H1 (cell line): ENCODE measurements at regions of chr19 and their contacts with region 1.

Region 1: DNA sequence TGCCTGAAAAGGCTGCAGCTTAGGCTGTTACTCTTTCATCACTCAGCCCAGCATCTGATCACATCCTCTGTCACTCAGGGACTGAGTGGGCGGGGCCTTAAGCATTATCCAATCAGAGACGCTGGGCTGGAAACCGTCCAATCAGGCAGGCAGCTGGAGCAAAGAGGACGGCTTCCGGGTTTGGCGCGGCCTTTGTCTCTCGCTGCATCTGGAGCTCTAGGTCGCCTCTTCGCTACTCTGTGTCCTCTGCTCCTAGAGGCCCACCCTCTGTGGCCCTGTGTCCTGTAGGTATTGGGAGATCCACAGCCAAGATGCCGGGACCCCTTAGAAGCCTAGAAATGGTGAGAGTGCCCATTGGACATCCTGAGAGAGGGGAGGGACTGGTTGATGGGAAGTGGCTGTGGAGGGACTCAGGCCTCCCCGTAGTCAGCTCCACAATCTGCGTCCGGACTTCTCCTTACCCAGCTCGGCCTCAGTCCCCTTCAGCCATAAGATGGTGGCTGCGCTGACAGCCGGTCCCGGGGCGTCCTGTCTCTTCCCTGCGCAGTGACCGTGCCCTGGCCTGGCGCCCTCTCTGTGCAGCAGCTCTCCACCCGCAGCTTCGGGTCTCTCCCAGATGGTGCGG is at the start of gene ZNF486:
- DNase-seq: peak; percentile 89 to 95
- H3K4me3 ChIP-seq: peak within 1 kb of the TSS; percentile 70 to 94 (median 82)
- H3K27ac ChIP-seq: peak within 1 kb of the TSS; percentile 80
- H3K4me1 ChIP-seq: peaks cover 0 to 5% (median 0%) of the 10 kb centered on the region in 4 experiments; a peak in 1 of 7 replicates
- H3K27me3 ChIP-seq: no peaks in the 10 kb centered on the region
- CTCF ChIP-seq: no peak
- EP300 ChIP-seq: no peak
- POLR2A ChIP-seq: peak; percentile 86 to 94
- RAD21 ChIP-seq: no peak
- total RNA-seq, gene ZNF486: 21.3 and 23.4 TPM in 2 replicates

Region 2: DNA sequence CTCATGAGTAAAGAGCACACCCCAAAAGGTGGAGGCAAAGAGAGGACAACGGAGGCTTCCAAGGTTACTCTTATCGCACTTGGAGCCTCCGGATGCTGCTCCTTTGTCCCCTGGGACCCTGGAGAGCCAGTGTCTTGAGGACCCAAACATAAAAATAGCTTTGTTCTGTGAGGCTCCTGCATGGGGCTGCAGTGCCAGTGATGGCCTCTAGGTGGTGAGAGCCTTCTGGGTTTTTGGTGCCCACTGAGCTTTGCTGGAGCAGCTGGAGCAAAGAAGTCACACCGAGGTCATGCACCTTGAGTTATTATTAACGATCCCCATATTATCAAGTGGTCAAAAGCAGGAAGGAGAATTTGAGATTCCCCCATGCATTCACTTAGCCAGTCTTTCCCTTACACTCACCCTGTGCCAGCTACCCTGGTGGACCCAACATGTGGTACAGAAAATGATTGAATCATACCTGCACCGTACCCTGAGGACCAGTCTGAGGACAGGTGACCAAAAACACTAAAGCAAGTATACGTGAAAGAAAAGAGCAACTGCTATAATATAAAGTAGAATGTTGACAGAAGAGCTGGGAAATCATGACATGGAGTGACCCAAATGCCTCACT is 169.4 kb before region 1 on chr19:
- CTCF ChIA-PET with region 1: interaction called, 9 read pairs
- POLR2A ChIA-PET with region 1: interaction called, 13 read pairs
- DNase-seq: peak; percentile 47 to 90
- H3K4me3 ChIP-seq: no peak overlapping the region
- H3K27ac ChIP-seq: no peak overlapping the region
- H3K4me1 ChIP-seq: no peaks in the 10 kb centered on the region
- H3K27me3 ChIP-seq: no peaks in the 10 kb centered on the region
- CTCF ChIP-seq: peak; percentile 72 to 94 (median 90)
- EP300 ChIP-seq: no peak
- POLR2A ChIP-seq: no peak
- RAD21 ChIP-seq: peak; percentile 87 to 88

Region 3: DNA sequence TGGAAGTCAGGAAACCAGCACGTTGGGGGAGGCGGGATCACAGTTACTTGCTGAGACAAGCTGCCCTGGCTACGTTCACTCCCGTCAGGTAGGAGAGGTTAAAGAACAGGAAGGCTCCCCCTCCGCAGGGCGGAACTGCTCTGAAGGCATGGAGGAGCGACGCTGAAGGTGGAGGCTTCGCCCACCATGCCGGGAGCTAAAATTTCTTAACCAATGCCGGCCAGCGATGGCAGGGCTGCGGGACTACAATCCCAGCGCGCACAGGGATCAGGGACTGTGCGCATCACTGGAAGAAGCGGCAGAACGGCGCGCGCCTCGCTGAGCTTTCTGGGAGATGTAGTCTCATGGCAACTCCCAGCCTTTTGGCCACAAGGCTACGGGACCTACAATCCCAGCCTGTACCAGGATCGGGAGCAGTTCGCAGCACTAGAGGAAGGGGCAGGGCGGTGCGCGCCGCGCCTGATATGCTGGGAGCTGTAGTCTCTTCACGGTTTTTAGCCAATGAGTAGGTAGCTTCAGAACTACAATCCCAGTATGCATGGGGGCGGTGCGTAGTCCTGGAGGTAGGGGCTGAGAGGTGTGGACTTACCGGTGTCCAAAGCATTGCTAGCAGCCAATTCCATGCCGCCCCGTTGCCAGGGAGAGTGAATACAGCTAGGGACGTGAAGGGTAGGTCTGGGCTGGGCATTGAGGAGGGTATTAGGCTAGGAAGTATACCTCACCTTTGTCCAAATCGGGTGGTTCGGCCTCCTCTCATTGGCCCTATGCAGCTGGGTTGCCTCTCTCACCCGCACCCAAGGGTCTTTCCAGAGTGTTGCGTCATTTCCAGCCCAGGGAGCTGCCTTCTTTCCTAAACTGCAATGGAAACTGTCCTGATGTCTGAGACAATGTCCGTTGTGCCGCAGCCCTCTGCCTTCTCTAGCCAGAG is 115.0 kb before region 1 on chr19:
- CTCF ChIA-PET with region 1: no interaction called
- POLR2A ChIA-PET with region 1: interaction called, 17 read pairs
- DNase-seq: peak; percentile 91 to 100
- H3K4me3 ChIP-seq: peak overlapping the region; percentile 76 to 87 (median 82)
- H3K27ac ChIP-seq: peak overlapping the region; percentile 87
- H3K4me1 ChIP-seq: peaks cover 0 to 3% (median 0%) of the 10 kb centered on the region in 4 experiments; a peak in 1 of 7 replicates
- H3K27me3 ChIP-seq: no peaks in the 10 kb centered on the region
- CTCF ChIP-seq: peak; percentile 8 to 19 (median 19); a peak in 2 of 4 replicates
- EP300 ChIP-seq: no peak
- POLR2A ChIP-seq: peak; percentile 66 to 78
- RAD21 ChIP-seq: peak; percentile 1 to 2; a peak in 2 of 4 replicates

Region 4: DNA sequence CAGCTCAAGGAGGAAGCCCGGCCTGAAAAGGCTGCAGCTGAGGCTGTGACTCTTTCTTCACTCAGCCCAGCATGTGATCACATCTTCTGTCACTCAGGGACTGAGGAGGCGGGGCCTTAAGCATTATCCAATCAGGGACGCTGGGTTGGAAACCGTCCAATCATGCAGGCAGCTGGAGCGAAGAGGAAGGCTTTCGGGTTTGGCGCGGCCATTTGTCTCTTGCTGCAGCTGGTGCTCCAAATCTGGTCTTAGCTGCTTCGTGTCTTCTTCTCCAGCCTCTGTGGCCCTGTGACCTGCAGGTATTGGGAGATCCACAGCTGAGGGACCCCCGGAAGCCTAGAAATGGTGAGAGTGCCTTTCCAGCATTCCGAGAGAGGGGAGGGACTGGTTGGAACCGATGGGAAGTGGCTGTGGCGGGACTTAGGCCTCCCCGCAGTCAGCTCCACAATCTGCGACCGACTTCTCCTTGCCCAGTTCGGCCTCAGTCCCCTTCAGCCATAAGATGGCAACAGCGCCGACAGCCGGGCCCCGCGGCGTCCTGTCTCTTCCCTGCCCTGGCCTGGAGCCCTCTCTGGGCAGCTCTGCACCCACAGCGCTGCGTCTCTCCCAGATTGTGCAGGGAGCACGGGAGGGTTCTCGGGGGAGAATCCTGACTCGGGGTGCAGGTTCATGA is 89.2 kb before region 1 on chr19 and contains the start of gene ZNF90:
- CTCF ChIA-PET with region 1: no interaction called
- POLR2A ChIA-PET with region 1: interaction called, 20 read pairs
- DNase-seq: peak; percentile 84 to 96
- H3K4me3 ChIP-seq: peak within 1 kb of the TSS; percentile 89 to 99 (median 96)
- H3K27ac ChIP-seq: peak within 1 kb of the TSS; percentile 93
- H3K4me1 ChIP-seq: peaks cover 9 to 23% (median 18%) of the 10 kb centered on the region in 4 experiments; a peak in 6 of 7 replicates
- H3K27me3 ChIP-seq: no peaks in the 10 kb centered on the region
- CTCF ChIP-seq: peak in 1 of 3 experiments; percentile 6; a peak in 1 of 4 replicates
- EP300 ChIP-seq: no peak
- POLR2A ChIP-seq: peak; percentile 79 to 88
- RAD21 ChIP-seq: peak in 1 of 2 experiments; percentile 8; a peak in 1 of 4 replicates
- total RNA-seq, gene ZNF90: 105 and 114 TPM in 2 replicates

Region 5: GRCh38 chr19:20151617-20152145 is 15.5 kb before region 1 on chr19:
- CTCF ChIA-PET with region 1: no interaction called
- POLR2A ChIA-PET with region 1: interaction called, 19 read pairs
- DNase-seq: no peak
- H3K4me3 ChIP-seq: no peak overlapping the region
- H3K27ac ChIP-seq: no peak overlapping the region
- H3K4me1 ChIP-seq: no peaks in the 10 kb centered on the region
- H3K27me3 ChIP-seq: no peaks in the 10 kb centered on the region
- CTCF ChIP-seq: no peak
- EP300 ChIP-seq: no peak
- POLR2A ChIP-seq: no peak
- RAD21 ChIP-seq: no peak

Region 6: GRCh38 chr19:20182222-20182785 is 15.2 kb after region 1 on chr19:
- CTCF ChIA-PET with region 1: interaction called, 3 read pairs
- POLR2A ChIA-PET with region 1: interaction called, 21 read pairs
- DNase-seq: no peak
- H3K4me3 ChIP-seq: no peak overlapping the region
- H3K27ac ChIP-seq: no peak overlapping the region
- H3K4me1 ChIP-seq: no peaks in the 10 kb centered on the region
- H3K27me3 ChIP-seq: no peaks in the 10 kb centered on the region
- CTCF ChIP-seq: no peak
- EP300 ChIP-seq: no peak
- POLR2A ChIP-seq: no peak
- RAD21 ChIP-seq: no peak

Region 7: GRCh38 chr19:20197747-20198146 is 30.6 kb after region 1 on chr19:
- CTCF ChIA-PET with region 1: no interaction called
- POLR2A ChIA-PET with region 1: no interaction called
- DNase-seq: no peak
- H3K4me3 ChIP-seq: no peak overlapping the region
- H3K27ac ChIP-seq: no peak overlapping the region
- H3K4me1 ChIP-seq: no peaks in the 10 kb centered on the region
- H3K27me3 ChIP-seq: no peaks in the 10 kb centered on the region
- CTCF ChIP-seq: no peak
- EP300 ChIP-seq: no peak
- POLR2A ChIP-seq: no peak
- RAD21 ChIP-seq: no peak

Region 8: DNA sequence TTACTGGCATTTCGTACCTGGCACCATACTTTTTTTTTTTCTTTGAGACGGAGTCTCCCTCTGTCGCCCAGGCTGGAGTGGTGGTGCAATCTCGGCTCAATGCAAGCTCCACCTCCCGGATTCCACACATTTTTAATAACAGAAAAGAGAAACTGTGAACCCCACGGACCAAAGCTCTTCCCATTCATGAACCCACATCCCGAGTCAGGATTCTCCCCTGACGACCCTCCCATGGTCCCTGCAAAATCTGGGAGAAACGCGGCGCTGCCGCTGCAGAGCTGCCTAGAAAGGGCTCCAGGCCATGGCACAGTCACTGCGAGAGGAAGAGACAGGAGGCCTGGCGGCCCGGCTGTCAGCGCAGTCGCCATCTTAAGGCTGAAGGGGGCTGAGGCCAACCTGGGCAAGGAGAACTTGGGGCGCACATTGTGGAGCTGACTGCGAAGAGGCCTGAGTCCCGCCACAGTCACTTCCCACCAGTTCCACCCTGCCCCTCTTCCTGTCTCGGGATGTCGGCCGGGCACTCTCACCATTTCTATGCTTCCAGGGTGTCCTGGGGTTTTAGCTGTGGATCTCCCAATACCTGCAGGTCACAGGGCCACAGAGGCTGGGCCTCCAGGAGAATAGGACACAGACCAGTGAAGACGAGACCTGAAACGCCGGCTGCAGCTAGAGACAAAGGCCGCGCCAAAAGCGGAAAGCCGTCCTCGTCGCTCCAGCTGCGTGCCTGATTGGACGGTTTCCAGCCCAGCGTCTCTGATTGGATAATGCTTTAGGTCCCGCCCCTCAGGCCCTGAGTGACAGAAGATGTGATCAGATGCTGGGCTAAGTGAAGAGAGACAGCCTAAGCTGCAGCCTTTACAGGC is 70.9 kb after region 1 on chr19:
- CTCF ChIA-PET with region 1: no interaction called
- POLR2A ChIA-PET with region 1: interaction called, 11 read pairs
- DNase-seq: peak; percentile 78 to 97
- H3K4me3 ChIP-seq: peak overlapping the region; percentile 86 to 98 (median 92)
- H3K27ac ChIP-seq: peak overlapping the region; percentile 94
- H3K4me1 ChIP-seq: peaks cover 0 to 13% (median 4%) of the 10 kb centered on the region in 4 experiments; a peak in 6 of 7 replicates
- H3K27me3 ChIP-seq: no peaks in the 10 kb centered on the region
- CTCF ChIP-seq: no peak; a peak in 1 of 4 replicates
- EP300 ChIP-seq: no peak
- POLR2A ChIP-seq: peak; percentile 90 to 96
- RAD21 ChIP-seq: no peak